Panc1 (cell line): ENCODE measurements at regions of chr7 and their contacts with region 1.

Region 1: DNA sequence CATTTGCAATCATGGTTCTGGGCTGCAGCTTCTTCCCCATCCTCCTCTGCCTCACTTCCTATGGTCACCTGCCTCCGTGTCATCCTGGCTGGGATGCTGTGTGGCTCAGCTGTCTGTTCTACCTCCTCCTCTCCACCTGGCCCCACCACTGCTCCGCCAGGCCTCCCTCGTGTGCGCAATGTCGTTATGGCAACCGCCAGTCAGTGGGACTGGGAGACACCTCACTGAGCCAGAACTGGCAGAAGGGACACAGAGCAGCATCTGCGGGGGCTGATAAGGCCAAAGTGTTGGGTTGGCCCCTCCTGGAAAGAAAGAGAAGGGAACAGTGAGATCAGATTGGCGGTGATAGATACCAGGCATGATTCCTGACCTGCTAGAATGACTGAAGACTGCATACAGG is 527.5 kb downstream of the INHBA start:
- DNase-seq: no peak
- ATAC-seq: no peak
- H3K4me3 ChIP-seq: no peak overlapping the region
- H3K27ac ChIP-seq: no peak overlapping the region
- H3K4me1 ChIP-seq: no peaks in the 10 kb centered on the region
- H3K27me3 ChIP-seq: no peaks in the 10 kb centered on the region
- CTCF ChIP-seq: no peak

Region 2: GRCh38 chr7:41104631-41105030 is 70.8 kb before region 1 on chr7:
- CTCF ChIA-PET with region 1: no interaction called
- POLR2A ChIA-PET with region 1: interaction called, 20 read pairs
- in situ Hi-C with region 1: no loop called
- intact Hi-C with region 1: no loop called
- DNase-seq: no peak
- ATAC-seq: no peak
- H3K4me3 ChIP-seq: no peak overlapping the region
- H3K27ac ChIP-seq: no peak overlapping the region
- H3K4me1 ChIP-seq: peaks cover 7% of the 10 kb centered on the region
- H3K27me3 ChIP-seq: no peaks in the 10 kb centered on the region
- CTCF ChIP-seq: no peak